ENCODE measurements at regions of chr13 and their contacts with region 1.

Region 1: GRCh38 chr13:27362064-27362883 is 62.1 kb upstream of the GTF3A start:
- DNase-seq: peak; percentile 70
- H3K4me3 ChIP-seq: peak overlapping the region in 2 of 3 experiments; percentile 12 to 29
- H3K27ac ChIP-seq: no peak overlapping the region
- H3K4me1 ChIP-seq: no peaks in the 10 kb centered on the region
- H3K27me3 ChIP-seq: peaks cover 6 to 19% of the 10 kb centered on the region in 2 experiments
- CTCF ChIP-seq: peak; percentile 93 to 99
- POLR2A ChIP-seq: no peak

Region 2: GRCh38 chr13:26946684-26947343 is 415.5 kb before region 1 on chr13:
- CTCF ChIA-PET with region 1: interaction called, 98 read pairs
- POLR2A ChIA-PET with region 1: no interaction called
- dilution Hi-C with region 1: no loop called
- intact Hi-C with region 1: loop called (anchors 1 kb)
- DNase-seq: peak; percentile 39
- H3K4me3 ChIP-seq: no peak overlapping the region
- H3K27ac ChIP-seq: no peak overlapping the region
- H3K4me1 ChIP-seq: no peaks in the 10 kb centered on the region
- H3K27me3 ChIP-seq: peaks cover 10 to 12% of the 10 kb centered on the region in 2 experiments
- CTCF ChIP-seq: peak; percentile 34 to 52
- POLR2A ChIP-seq: no peak

Region 3: DNA sequence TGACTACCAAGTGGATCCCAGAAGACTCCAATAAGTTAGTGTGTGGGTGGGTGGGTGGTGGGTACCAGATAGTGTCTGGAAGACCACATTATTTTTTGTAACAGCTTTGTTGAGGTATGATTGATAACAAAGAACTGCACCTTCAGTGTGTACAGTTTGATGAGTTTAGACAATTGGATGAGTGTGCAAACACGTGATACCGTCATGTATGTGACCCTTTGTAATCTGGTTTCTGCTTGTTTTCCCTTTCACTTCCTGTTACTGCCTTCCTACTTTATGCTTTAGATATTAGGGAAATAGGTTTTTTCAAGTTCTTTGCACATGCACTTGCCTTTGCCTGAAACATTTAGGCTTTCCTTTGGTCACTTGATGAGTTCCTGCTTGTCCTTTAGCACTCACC is 102.4 kb before region 1 on chr13:
- CTCF ChIA-PET with region 1: no interaction called
- POLR2A ChIA-PET with region 1: no interaction called
- dilution Hi-C with region 1: no loop called
- intact Hi-C with region 1: no loop called
- DNase-seq: peak; percentile 68
- H3K4me3 ChIP-seq: no peak overlapping the region
- H3K27ac ChIP-seq: peak overlapping the region; percentile 35
- H3K4me1 ChIP-seq: peaks cover 12% of the 10 kb centered on the region
- H3K27me3 ChIP-seq: no peaks in the 10 kb centered on the region
- CTCF ChIP-seq: no peak
- POLR2A ChIP-seq: peak; percentile 15

Region 4: DNA sequence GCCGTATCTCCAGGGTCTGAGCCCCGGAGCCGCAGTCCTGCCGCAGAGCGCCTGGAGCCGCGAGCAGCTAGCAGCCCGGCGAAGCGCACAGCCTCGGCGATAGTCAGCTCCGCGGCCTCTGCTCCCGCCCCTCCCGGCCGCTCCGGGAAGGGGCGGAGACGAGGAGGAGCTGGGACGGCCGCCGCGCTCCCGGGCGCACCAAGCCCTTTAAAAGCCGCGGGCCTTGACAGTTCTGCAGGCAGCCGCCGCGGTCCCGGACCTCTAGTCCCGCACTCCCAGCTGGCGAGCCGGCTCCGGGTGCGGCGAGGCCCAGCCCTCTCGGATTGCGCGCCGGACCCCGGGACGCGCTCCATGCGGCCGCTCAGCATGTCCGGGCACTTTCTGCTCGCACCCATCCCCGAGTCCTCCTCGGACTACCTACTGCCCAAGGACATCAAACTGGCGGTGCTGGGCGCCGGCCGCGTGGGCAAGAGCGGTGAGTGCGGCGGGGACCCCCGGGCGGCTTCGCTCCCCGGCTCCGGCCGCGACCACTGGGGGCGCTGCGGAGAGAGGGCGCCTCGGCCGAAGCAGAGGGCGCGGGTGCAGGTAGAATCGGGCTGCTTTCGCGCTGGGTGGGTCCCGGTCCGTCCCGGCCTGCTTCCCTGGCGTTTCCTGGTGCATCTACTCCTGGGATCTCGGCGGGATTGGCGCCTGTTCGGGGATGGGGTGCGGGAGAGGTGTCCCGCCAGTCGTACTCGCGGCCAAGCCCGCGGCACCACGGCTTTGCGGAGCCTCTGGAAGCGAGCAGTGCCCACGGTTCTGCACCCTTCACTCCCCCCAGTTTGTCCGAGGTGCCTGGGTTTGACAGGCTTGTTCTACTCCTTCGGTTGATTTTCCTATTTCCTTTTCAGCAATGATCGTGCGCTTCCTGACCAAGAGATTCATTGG is 91.4 kb before region 1 on chr13 and contains the start of gene RASL11A:
- CTCF ChIA-PET with region 1: interaction called, 6 read pairs
- POLR2A ChIA-PET with region 1: no interaction called
- dilution Hi-C with region 1: no loop called
- intact Hi-C with region 1: loop called (anchors 5 kb)
- DNase-seq: peak; percentile 87
- H3K4me3 ChIP-seq: peak within 1 kb of the TSS; percentile 36 to 71 (median 67)
- H3K27ac ChIP-seq: peak within 1 kb of the TSS; percentile 12
- H3K4me1 ChIP-seq: peaks cover 16% of the 10 kb centered on the region
- H3K27me3 ChIP-seq: peaks cover 17 to 18% of the 10 kb centered on the region in 2 experiments
- CTCF ChIP-seq: peak; percentile 84 to 91
- POLR2A ChIP-seq: peak; percentile 75
- total RNA-seq, gene RASL11A: 1.3 and 2.1 TPM in 2 replicates

Region 5: DNA sequence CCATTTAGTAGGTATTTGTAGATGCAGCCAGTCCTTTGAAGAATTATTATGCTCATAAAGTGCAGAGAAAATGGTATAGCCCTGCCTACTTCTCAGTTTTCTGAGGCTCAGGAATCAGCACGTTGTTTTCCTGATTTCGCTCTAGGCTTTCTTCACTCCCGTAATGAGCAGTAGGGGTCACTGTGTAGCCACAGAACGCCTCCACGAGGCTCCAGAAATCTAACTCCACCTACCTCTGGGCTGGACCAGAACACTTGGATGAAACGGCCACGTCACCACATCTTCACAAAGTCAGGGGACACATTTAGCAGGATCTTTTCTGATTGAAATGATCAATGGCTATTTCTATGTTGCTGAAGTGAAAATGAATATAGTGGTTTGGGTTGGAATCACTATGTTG is 12.4 kb after region 1 on chr13:
- CTCF ChIA-PET with region 1: interaction called, 51 read pairs
- POLR2A ChIA-PET with region 1: no interaction called
- dilution Hi-C with region 1: no loop called
- intact Hi-C with region 1: no loop called
- DNase-seq: peak; percentile 73
- H3K4me3 ChIP-seq: no peak overlapping the region
- H3K27ac ChIP-seq: no peak overlapping the region
- H3K4me1 ChIP-seq: no peaks in the 10 kb centered on the region
- H3K27me3 ChIP-seq: peaks cover 6 to 10% of the 10 kb centered on the region in 2 experiments
- CTCF ChIP-seq: peak; percentile 67 to 75
- POLR2A ChIP-seq: no peak

Region 6: GRCh38 chr13:27953676-27954405 is 591.6 kb after region 1 on chr13:
- CTCF ChIA-PET with region 1: interaction called, 54 read pairs
- POLR2A ChIA-PET with region 1: no interaction called
- dilution Hi-C with region 1: no loop called
- intact Hi-C with region 1: loop called (anchors 10 kb)
- DNase-seq: peak; percentile 64
- H3K4me3 ChIP-seq: peak overlapping the region; percentile 27 to 52 (median 32)
- H3K27ac ChIP-seq: no peak overlapping the region
- H3K4me1 ChIP-seq: peaks cover 15% of the 10 kb centered on the region
- H3K27me3 ChIP-seq: peaks cover 36 to 67% of the 10 kb centered on the region in 2 experiments
- CTCF ChIP-seq: peak; percentile 89 to 95
- POLR2A ChIP-seq: no peak

Region 7: GRCh38 chr13:27988520-27988919 is 626.2 kb after region 1 on chr13 and contains the start of gene URAD:
- CTCF ChIA-PET with region 1: interaction called, 128 read pairs
- POLR2A ChIA-PET with region 1: no interaction called
- dilution Hi-C with region 1: no loop called
- intact Hi-C with region 1: loop called (anchors 1 kb)
- DNase-seq: no peak
- H3K4me3 ChIP-seq: no peak within 1 kb of the TSS
- H3K27ac ChIP-seq: no peak within 1 kb of the TSS
- H3K4me1 ChIP-seq: no peaks in the 10 kb centered on the region
- H3K27me3 ChIP-seq: peaks cover 12 to 13% of the 10 kb centered on the region in 2 experiments
- CTCF ChIP-seq: no peak
- POLR2A ChIP-seq: no peak
- total RNA-seq, gene URAD: not detected in 2 replicates